ENCODE measurements at regions of chr7 and their contacts with region 1.

Region 1: GRCh38 chr7:51224811-51225612 is 91.6 kb downstream of the COBL start:
- DNase-seq: peak; percentile 72 to 73
- H3K4me3 ChIP-seq: no peak overlapping the region
- H3K27ac ChIP-seq: no peak overlapping the region
- H3K4me1 ChIP-seq: peaks cover 18% of the 10 kb centered on the region
- H3K27me3 ChIP-seq: no peaks in the 10 kb centered on the region
- CTCF ChIP-seq: peak; percentile 85

Region 2: DNA sequence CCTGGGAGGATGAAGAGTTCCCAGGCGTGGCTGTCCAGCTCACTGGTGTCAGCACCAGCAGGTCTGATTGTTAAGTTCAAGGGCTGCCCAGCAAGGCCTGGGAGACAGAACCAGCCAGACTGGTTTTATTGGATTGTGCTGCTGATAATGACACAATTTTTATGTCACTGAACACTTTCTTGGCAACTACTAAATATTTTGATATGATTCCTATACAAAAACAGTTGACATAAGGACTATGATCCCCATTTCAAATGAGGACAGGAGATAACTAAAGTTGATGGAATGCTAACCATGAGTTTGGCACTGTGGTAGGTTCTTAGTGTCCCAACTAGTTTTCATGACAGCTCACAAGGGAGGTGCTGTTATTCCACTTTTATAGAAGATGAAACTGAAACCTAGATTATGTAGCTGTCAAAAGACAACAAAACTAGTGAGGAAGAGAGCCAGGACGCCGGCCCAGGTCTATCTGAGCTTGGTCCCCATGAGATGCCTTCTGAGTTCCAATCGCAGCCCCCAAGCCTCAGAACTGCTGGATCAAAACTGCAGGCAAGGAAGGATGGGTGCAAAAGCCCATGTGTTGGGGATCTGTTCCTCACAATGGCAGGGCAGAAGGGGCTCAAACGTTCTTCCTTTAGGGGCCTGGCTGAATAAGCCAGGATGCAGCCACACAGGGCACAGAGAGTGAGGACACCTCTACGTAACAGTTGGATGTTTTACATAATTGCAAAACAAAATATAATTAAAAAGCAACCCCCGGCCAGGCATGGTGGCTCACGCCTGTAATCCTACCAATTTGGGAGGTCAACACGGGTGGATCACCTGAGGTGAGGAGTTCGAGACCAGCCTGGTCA is 38.8 kb after region 1 on chr7:
- CTCF ChIA-PET with region 1: interaction called, 5 read pairs
- POLR2A ChIA-PET with region 1: interaction called, 9 read pairs
- intact Hi-C with region 1: loop called (anchors 5 kb)
- DNase-seq: peak; percentile 84 to 100
- H3K4me3 ChIP-seq: peak overlapping the region; percentile 45; the same call in 1 of the 2 replicates
- H3K27ac ChIP-seq: peak overlapping the region; percentile 68
- H3K4me1 ChIP-seq: peaks cover 36% of the 10 kb centered on the region
- H3K27me3 ChIP-seq: no peaks in the 10 kb centered on the region
- CTCF ChIP-seq: no peak

Region 3: GRCh38 chr7:51315393-51316261 is 90.6 kb after region 1 on chr7:
- CTCF ChIA-PET with region 1: no interaction called
- POLR2A ChIA-PET with region 1: interaction called, 4 read pairs
- intact Hi-C with region 1: loop called (anchors 2 kb)
- DNase-seq: peak; percentile 92 to 98
- H3K4me3 ChIP-seq: peak overlapping the region; percentile 71
- H3K27ac ChIP-seq: peak overlapping the region; percentile 86
- H3K4me1 ChIP-seq: peaks cover 34% of the 10 kb centered on the region
- H3K27me3 ChIP-seq: no peaks in the 10 kb centered on the region
- CTCF ChIP-seq: no peak

Region 4: GRCh38 chr7:51366930-51367613 is 142.1 kb after region 1 on chr7:
- CTCF ChIA-PET with region 1: interaction called, 23 read pairs
- POLR2A ChIA-PET with region 1: interaction called, 3 read pairs
- intact Hi-C with region 1: loop called (anchors 1 kb)
- DNase-seq: peak; percentile 54 to 61
- H3K4me3 ChIP-seq: no peak overlapping the region
- H3K27ac ChIP-seq: no peak overlapping the region
- H3K4me1 ChIP-seq: peaks cover 7% of the 10 kb centered on the region
- H3K27me3 ChIP-seq: no peaks in the 10 kb centered on the region
- CTCF ChIP-seq: peak; percentile 96

Measured in PC-9 (cell line).